Activated T-helper 1 cell treated with anti-CD3 and anti-CD28 coated beads, Interleukin-12 subunit alpha, Interleukin-12 subunit beta, Interleukin-2, Interleukin-4 antibody, amounts not matched to agents 30 ng/mL and 10 ng/mL and 1 ng/mL, durations not matched to agents 14 hours and 24 hours and 36 hours (primary cell): ENCODE measurements at regions of chr13 and their contacts with region 1.

Region 1: DNA sequence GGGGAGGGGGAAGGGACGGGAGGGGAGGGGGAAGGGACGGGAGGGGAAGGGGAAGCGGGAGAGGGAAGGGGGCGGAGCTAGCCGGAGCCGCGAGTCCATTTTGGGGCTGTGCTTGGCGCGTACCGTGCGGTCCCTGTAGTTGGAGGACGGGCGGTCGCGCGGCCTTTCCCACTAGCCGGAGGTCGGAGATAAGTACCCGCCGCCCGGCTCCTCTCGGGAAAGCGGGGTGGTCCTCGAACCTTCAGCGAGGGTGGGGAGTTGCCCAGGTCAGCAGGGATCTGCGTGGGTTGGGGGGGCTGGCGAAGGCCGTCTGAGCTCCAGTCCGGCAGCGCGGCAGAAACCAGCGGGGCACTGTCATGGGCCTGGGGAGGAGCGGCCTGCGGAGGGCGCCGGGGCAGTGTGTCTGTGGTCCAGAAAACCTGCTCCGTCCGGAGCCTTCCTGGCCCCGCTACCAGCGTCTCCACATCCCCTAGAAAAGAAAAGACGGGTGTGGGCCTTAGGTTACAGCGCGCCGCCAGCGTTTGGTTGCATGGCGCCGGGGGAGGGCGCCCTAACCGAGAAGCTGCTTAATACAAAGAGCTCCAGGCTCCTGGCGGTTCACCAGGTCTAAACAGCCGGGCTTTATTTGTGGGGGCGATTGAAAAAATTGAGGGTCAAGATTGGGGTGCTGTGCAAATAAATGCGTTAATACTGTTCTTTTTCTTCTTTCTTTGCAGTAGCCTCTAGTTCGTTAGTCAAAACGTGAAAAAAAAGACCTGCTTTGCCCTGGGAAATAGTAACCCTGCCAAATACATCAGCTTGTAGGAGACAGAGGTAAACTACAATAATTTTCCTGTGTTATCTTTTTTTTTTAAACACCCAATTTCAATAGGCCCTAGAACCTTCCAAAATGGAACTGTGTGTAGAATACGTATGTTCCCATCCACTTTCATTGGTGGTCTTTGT is at the start of gene TRIM13:
- DNase-seq: peak; percentile 76
- H3K4me3 Mint-ChIP-seq: peak within 1 kb of the TSS; percentile 87
- H3K27ac Mint-ChIP-seq: peak within 1 kb of the TSS; percentile 82
- H3K4me1 Mint-ChIP-seq: peaks cover 54% of the 10 kb centered on the region
- H3K27me3 Mint-ChIP-seq: no peaks in the 10 kb centered on the region
- total RNA-seq, gene TRIM13: 14.7 and 16.5 TPM in 2 replicates

Region 2: GRCh38 chr13:49976314-49977258 is 20.6 kb before region 1 on chr13:
- intact Hi-C with region 1: loop called (anchors 2 kb)
- DNase-seq: peak; percentile 56
- H3K4me3 Mint-ChIP-seq: no peak overlapping the region
- H3K27ac Mint-ChIP-seq: no peak overlapping the region
- H3K4me1 Mint-ChIP-seq: peaks cover 5% of the 10 kb centered on the region
- H3K27me3 Mint-ChIP-seq: no peaks in the 10 kb centered on the region

Region 3: GRCh38 chr13:50123862-50124536 is 126.8 kb after region 1 on chr13:
- intact Hi-C with region 1: loop called (anchors 1 kb)
- DNase-seq: peak; percentile 62
- H3K4me3 Mint-ChIP-seq: peak overlapping the region; percentile 88
- H3K27ac Mint-ChIP-seq: peak overlapping the region; percentile 91
- H3K4me1 Mint-ChIP-seq: peaks cover 50% of the 10 kb centered on the region
- H3K27me3 Mint-ChIP-seq: peaks cover 1% of the 10 kb centered on the region

Region 4: DNA sequence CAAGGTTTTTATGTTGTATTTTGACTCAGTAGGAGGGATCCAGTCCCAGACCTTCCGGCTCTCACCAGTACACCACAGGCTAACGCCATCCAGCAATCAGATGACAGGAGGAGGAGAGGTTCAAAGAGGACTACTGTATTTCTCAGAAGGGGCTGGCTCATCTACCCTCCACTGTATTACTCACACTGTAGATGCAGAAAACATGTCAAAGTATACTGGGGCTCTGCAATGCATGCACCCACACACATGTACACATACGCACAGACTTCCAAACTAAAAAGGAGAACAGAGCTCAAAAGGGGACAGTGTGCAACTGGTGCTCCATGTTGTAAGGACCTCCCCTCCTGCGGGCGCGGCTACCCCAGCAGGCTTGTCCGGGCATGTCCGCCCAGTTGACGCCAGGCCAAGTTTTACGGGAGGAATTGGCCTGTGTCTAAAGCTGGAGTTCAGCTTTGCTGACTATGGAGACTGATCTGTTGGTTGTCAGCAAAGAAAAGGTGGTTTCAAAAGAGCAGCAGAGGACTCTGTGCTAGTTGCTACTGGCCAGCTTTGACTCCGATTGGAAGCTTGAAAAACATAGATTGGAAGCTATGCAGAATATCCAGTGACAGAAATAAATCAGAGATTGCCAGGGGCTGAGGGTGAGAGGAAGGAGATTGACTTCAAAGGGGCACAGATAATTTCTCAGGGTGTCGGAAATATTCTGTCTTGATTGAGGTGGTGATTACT is 532.1 kb after region 1 on chr13:
- intact Hi-C with region 1: loop called (anchors 5 kb)
- DNase-seq: no peak
- H3K4me3 Mint-ChIP-seq: no peak overlapping the region
- H3K27ac Mint-ChIP-seq: peak overlapping the region; percentile 59
- H3K4me1 Mint-ChIP-seq: peaks cover 45% of the 10 kb centered on the region
- H3K27me3 Mint-ChIP-seq: peaks cover 19% of the 10 kb centered on the region

Region 5: DNA sequence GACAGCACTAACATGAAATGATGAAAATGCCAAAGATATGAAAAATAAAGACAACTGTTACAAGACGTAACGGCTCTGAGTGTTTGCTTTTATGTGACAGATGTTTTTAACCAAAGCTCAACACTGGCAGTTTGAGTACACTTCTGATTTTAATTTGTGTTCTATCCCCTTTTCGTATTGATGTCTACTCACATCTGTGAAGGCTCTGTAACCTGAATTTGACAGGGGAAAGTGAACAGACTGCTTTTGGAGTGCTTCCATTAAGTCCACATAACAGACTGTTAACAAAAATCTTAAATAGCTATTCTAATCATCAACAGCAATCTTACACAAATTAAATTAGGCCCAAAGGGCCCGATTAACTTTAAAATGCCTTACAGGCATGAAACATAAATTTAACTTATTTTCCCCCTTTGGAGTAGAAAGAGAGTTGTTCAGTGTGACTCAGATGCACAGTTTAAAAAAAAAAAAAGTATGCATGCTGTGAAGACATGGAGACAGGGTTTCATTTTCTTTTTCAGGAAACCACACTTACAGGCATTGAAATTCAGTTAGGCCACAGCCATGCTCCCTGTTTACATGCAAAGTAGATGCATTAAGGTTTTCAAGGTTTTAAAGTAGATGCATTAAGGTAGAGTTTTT is 896.1 kb after region 1 on chr13:
- intact Hi-C with region 1: loop called (anchors 1 kb)
- DNase-seq: peak; percentile 40
- H3K4me3 Mint-ChIP-seq: peak overlapping the region; percentile 77
- H3K27ac Mint-ChIP-seq: peak overlapping the region; percentile 87
- H3K4me1 Mint-ChIP-seq: peaks cover 49% of the 10 kb centered on the region
- H3K27me3 Mint-ChIP-seq: no peaks in the 10 kb centered on the region